ENCODE measurements at regions of chr16 and their contacts with region 1.

Region 1: GRCh38 chr16:48687421-48688038 is 77.5 kb upstream of the N4BP1 start:
- DNase-seq: no peak
- H3K4me3 Mint-ChIP-seq: no peak overlapping the region
- H3K27ac Mint-ChIP-seq: no peak overlapping the region
- H3K4me1 Mint-ChIP-seq: no peaks in the 10 kb centered on the region
- H3K27me3 Mint-ChIP-seq: peaks cover 8% of the 10 kb centered on the region

Region 2: GRCh38 chr16:48535831-48536613 is 151.5 kb before region 1 on chr16:
- intact Hi-C with region 1: no loop called
- DNase-seq: no peak
- H3K4me3 Mint-ChIP-seq: no peak overlapping the region
- H3K27ac Mint-ChIP-seq: no peak overlapping the region
- H3K4me1 Mint-ChIP-seq: peaks cover 9% of the 10 kb centered on the region
- H3K27me3 Mint-ChIP-seq: no peaks in the 10 kb centered on the region

Region 3: DNA sequence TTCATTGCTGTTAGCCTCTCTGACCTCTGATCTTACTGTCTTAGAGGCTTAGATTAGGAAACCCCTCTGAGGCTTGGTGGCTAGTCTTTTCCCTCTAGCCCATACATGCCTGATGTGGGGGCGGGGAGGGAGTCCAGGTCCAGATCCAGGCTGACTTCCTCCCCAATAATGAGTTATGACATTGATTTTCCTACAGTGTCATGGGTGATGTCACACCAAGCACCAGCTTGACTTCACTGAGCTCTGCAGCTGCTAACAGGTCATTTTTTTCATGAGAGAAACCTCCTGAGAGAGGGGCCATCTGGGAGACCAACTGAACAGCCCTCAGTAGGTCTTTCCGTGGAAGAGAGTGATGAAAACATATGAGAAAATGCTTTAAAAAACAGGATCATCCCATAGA is 102.6 kb after region 1 on chr16:
- intact Hi-C with region 1: no loop called
- DNase-seq: no peak
- H3K4me3 Mint-ChIP-seq: no peak overlapping the region
- H3K27ac Mint-ChIP-seq: no peak overlapping the region
- H3K4me1 Mint-ChIP-seq: no peaks in the 10 kb centered on the region
- H3K27me3 Mint-ChIP-seq: no peaks in the 10 kb centered on the region

Region 4: GRCh38 chr16:49348408-49349177 is 661.1 kb after region 1 on chr16:
- intact Hi-C with region 1: loop called (anchors 2 kb)
- DNase-seq: no peak
- H3K4me3 Mint-ChIP-seq: no peak overlapping the region
- H3K27ac Mint-ChIP-seq: no peak overlapping the region
- H3K4me1 Mint-ChIP-seq: no peaks in the 10 kb centered on the region
- H3K27me3 Mint-ChIP-seq: peaks cover 1% of the 10 kb centered on the region

Measured in activated T-helper 2 cell treated with anti-CD3 and anti-CD28 coated beads, Interferon-gamma antibody, Interleukin-2, Interleukin-4, amounts not matched to agents 10 μg/mL and 5 μg/mL and 100 μg/mL, durations not matched to agents 14 hours and 24 hours and 36 hours (primary cell).